Head of caudate nucleus (tissue), 42 donors: ENCODE measurements at regions of chr5 and their contacts with region 1.

Region 1: DNA sequence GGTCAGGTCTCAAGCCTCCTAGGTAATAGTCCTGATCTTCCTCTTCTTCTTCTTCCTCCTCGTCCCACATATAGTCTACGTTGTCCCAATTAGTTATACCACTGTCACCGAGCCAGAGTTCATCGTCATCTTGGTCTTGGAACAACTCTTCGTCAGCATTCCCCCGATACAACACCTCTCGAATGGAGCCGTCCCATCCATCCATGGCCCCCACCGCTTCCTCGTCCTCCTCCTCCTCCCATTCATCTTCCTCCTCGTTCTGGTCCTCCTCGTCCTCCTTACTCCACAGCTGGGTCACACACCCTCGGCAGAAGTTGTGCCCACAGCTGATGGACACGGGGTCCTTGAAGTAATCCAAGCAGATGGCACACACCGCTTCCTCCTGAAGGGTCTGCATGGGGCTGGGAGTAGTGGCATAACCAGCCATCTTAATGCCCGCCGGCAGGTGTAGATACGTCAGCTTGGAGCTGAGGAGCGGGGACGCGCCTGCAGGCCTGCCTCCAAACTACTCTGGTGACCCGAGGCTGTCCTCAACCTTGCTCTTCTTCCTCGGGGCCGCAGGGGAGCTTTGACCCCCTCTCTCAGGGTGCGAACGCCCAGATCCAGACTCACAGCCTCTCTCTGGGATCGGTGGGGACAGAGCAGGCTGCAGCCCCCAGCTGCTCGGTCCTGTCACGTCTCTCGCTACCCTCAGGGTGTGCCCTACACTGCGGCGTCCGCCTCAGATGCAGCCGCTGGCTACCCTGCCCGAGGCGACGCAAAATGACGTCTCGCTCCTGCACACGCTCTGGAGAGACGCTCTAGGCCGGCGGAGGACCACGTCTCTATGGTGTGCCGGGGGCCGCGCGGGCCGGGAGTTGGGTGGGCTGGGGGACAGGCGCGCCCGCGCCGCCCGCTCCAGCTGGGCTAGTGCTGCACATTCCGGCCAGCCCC is at the start of gene TRIM52:
- DNase-seq: peak; percentile 83 to 97 (median 93)

Region 2: DNA sequence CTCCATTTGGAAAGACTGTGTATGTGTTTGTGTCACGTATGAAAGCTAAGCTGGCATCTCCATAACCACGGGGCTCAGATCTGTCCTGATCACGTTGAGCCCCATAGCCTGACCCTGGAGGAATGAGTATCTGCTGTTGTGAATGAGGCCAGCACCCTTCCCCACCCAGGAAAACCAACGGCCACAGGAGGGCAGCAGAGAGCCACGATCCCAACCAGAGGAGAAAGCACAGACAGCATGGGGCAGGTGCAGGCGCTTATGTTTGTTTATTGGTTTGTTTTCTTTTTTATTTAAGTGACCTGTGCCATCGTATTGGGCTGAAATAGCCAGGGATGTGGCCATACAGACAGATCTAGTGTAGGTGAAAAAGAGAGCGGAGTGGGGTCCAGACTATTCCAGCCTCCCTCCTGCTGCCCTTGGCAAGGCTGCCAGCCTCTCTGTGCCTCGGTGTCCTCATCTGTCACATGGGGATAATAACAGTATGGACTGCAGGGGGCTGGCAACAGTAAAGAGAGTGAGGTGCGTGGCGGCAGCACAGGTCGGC is 101.3 kb before region 1 on chr5:
- intact Hi-C with region 1: no loop called
- DNase-seq: peak; percentile 72 to 98 (median 93)

Region 3: DNA sequence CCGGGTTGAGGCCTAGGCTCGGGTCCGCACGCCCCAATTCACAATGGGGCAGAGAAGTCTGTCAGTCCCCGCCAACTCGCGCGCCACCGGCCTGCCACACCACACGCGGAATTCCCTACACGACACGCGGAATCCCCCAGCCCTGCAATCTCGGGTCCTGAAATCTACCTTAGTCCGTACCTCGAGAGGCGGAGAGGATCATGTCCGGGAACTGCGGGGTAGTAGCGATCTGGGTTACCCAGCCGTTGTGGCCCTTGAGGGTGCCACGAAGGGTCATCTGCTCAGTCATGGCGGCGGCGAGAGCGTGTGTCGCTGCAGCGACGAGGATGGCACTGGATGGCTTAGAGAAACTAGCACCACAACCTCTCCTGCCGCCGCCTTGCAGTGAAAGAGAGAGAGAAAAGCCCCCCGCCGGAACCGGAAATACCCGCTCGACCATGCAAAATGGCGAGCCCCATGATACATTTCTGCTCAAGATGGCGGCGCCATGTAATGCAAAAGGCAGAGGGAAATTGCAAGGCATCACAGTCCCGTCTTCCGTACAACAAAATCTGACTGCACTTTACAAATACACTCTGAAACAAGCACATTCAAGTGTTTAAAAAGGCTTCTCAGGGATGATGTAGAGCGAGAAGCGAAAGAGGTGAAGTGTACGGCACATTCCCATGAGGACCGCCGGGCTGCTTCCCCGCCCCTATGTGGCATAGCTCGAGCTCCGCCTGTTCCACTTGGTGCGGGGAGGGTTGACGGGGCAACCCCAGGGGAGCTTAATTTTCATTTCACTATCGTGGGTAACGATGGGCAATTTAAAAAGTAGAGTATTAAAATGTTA is 16.9 kb before region 1 on chr5 and contains the start of gene RACK1:
- intact Hi-C with region 1: loop called (anchors 2 kb)
- DNase-seq: peak; percentile 85 to 97 (median 92)